ENCODE measurements at regions of chr11 and their contacts with region 1.

Region 1: GRCh38 chr11:126268708-126269579 is at the starts of genes FOXRED1 and SRPRA:
- DNase-seq: peak; percentile 100
- H3K4me3 ChIP-seq: peak within 1 kb of the TSS; percentile 73 to 88 (median 78)
- H3K27ac ChIP-seq: peak within 1 kb of the TSS; percentile 86 to 97 (median 92)
- H3K4me1 ChIP-seq: peaks cover 11 to 44% (median 31%) of the 10 kb centered on the region in 6 donors
- H3K27me3 ChIP-seq: no peaks in the 10 kb centered on the region
- CTCF ChIP-seq: peak in 2 of 11 experiments; percentile 34 to 36
- POLR2A ChIP-seq: peak in 2 of 3 donors; percentile 23 to 49
- total RNA-seq, gene FOXRED1: 26.1 to 48.1 (median 32.0) TPM
- total RNA-seq, gene SRPRA: 103 to 130 (median 117) TPM

Region 2: GRCh38 chr11:126090452-126090851 is 178.5 kb before region 1 on chr11:
- intact Hi-C with region 1: no loop called
- DNase-seq: peak; percentile 31
- H3K4me3 ChIP-seq: no peak overlapping the region
- H3K27ac ChIP-seq: no peak overlapping the region
- H3K4me1 ChIP-seq: no peaks in the 10 kb centered on the region
- H3K27me3 ChIP-seq: no peaks in the 10 kb centered on the region
- CTCF ChIP-seq: no peak
- POLR2A ChIP-seq: no peak

Region 3: GRCh38 chr11:126211235-126212088 is 57.5 kb before region 1 on chr11 and contains the starts of genes FAM118B and RPUSD4:
- intact Hi-C with region 1: loop called (anchors 10 kb)
- DNase-seq: peak; percentile 100
- H3K4me3 ChIP-seq: peak within 1 kb of the TSS; percentile 76 to 98 (median 94)
- H3K27ac ChIP-seq: peak within 1 kb of the TSS in 6 of 8 donors; percentile 59 to 82 (median 68)
- H3K4me1 ChIP-seq: peaks cover 12 to 58% (median 36%) of the 10 kb centered on the region in 6 donors
- H3K27me3 ChIP-seq: no peaks in the 10 kb centered on the region
- CTCF ChIP-seq: peak in 1 of 11 experiments; percentile 26
- POLR2A ChIP-seq: peak in 2 of 3 donors; percentile 65 to 71
- total RNA-seq, gene FAM118B: 15.3 to 32.3 (median 21.0) TPM
- total RNA-seq, gene RPUSD4: 20.6 to 26.7 (median 22.3) TPM

Measured in spleen (tissue), 13 donors.